Activated CD4-positive, alpha-beta T cell treated with anti-CD3 and anti-CD28 coated beads, Interleukin-2, amount 10 ng/mL, durations not matched to agents 24 days and 14 days (primary cell): ENCODE measurements at regions of chr9 and their contacts with region 1.

Region 1: GRCh38 chr9:34611829-34612630 is at the start of gene RPP25L:
- DNase-seq: peak; percentile 97
- H3K4me3 Mint-ChIP-seq: peak within 1 kb of the TSS; percentile 96
- H3K27ac Mint-ChIP-seq: peak within 1 kb of the TSS; percentile 97
- H3K4me1 Mint-ChIP-seq: peaks cover 21% of the 10 kb centered on the region
- H3K27me3 Mint-ChIP-seq: no peaks in the 10 kb centered on the region
- total RNA-seq, gene RPP25L: 34.8 and 36.1 TPM in 2 replicates

Region 2: DNA sequence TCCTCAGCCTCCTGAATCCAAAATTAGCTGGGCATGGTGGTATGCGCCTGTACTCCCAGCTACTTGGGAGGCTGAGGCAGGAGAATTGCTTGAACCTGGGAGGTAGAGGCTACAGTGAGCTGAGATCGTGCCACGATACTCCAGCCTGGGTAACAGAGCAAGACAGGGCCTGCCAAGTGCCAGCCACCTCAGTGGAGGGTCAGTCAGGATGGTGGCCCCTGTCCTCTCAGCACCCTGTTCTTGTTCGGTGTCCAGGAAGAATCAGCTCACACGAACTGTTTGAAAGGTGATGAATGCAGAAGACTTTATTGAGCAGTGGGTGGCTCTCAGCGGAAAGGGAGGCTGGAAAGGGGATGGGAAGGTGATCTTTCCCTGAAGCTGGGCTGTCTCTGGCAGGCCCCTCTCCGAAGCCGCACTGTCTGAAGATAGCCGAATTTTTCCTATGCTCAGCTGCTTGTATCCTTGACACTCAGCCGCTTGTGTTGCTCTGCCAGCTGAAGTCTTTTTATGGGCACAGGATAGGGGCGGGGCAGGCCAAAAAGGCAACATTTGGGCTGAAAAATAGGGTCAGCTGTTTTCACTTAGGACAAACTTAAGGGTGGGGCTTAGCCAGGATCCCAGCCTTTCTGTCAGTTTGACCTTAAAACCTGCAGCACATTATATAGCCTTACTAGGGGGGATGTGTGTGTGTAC is 744.1 kb before region 1 on chr9:
- intact Hi-C with region 1: no loop called
- DNase-seq: no peak
- H3K4me3 Mint-ChIP-seq: no peak overlapping the region
- H3K27ac Mint-ChIP-seq: no peak overlapping the region
- H3K4me1 Mint-ChIP-seq: peaks cover 6% of the 10 kb centered on the region
- H3K27me3 Mint-ChIP-seq: no peaks in the 10 kb centered on the region

Region 3: GRCh38 chr9:34126207-34127034 is 485.6 kb before region 1 on chr9 and contains the start of gene DCAF12:
- intact Hi-C with region 1: loop called (anchors 5 kb)
- DNase-seq: peak; percentile 98
- H3K4me3 Mint-ChIP-seq: peak within 1 kb of the TSS; percentile 92
- H3K27ac Mint-ChIP-seq: peak within 1 kb of the TSS; percentile 98
- H3K4me1 Mint-ChIP-seq: peaks cover 38% of the 10 kb centered on the region
- H3K27me3 Mint-ChIP-seq: no peaks in the 10 kb centered on the region
- total RNA-seq, gene DCAF12: 45.6 and 51.9 TPM in 2 replicates

Region 4: DNA sequence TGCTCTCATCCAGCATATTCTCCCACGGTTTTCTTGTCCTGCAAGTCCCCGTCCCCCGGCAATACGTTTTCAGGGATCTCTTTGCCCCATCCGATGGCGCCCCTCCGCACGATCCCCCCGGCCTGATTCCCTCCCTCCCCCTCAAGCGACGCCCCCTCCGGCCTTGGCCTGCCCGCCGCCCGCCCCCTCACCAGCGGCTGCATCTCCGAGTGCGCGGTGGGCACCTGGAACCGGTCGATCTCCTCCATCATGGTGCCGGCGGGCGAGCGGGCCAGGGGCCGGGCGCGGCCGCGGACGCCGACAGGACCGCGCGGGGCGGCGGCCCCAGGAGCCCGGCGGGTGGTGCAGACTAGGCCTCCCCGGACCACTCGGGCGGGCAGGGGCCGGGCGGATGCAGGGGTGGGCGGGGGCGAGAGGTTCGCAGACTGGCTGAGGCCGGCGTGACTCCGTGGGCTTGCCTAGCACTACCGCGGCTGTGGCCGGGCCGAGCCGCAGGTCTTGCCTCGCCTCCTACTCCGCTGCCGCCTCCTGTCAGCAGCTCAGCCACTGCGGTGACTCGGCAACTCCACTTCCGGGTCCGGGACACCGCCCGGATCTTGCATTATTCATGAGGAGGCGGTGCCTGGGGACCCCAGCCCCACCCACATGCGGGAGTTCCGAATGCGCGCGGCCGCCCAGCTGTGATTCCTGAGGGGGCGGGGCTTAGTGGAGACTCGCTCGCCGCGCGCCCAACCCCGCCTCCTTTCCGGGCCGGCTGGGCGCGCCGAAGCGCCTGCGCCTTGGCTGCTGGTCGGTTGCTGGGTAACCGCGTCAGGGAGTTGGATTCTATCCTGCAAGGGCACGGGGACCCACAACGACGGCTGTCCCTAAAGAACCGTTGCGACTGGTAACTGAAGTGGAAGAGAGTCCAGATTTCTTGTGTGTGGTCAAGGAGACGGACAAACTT is 153.7 kb before region 1 on chr9 and contains the starts of genes DNAI1 and FAM219A:
- intact Hi-C with region 1: loop called (anchors 1 kb)
- DNase-seq: peak; percentile 100
- H3K4me3 Mint-ChIP-seq: peak within 1 kb of the TSS; percentile 92
- H3K27ac Mint-ChIP-seq: peak within 1 kb of the TSS; percentile 81
- H3K4me1 Mint-ChIP-seq: peaks cover 41% of the 10 kb centered on the region
- H3K27me3 Mint-ChIP-seq: peaks cover 18% of the 10 kb centered on the region
- total RNA-seq, gene DNAI1: not detected in 2 replicates
- total RNA-seq, gene FAM219A: 13.6 and 16.3 TPM in 2 replicates

Region 5: DNA sequence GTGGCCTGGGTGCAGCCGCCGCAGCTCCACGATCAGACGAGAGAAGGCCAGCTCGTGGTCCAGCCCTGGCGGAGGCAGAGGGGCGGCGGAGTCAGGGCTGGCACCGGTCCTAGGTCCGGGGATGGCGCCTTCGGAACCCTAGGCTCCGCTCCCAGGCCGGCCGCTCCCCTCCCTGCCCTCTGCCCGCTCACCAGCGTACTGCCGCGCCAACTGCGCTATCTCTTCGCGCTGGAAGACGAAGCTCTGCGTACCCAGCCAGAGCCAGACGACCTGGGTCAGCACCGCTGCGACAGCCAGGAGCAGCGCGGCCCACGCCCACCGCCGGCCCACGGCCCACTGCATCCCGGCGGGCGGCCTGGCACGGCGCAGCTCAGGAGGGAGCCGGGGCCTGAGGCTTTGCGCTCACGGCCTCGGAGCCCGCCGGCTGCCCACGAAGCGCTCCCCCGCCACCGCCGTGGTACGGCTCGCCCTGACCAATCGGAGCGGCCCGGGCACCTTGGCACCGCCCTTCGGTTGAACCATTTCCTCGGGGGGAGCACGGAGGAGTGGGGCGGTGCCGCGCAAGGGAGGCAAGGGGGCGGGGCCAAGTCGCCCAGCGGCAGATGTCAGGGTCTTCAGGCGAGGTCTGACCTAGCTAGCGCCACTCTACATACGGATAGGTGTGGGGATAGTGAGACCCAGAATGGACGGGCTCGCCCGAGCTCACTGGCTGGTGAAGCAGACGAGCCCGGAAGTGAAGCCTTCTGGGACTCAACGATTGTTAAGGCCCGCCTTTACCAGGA is 25.5 kb after region 1 on chr9 and contains the start of gene SIGMAR1:
- intact Hi-C with region 1: loop called (anchors 1 kb)
- DNase-seq: peak; percentile 98
- H3K4me3 Mint-ChIP-seq: peak within 1 kb of the TSS; percentile 99
- H3K27ac Mint-ChIP-seq: peak within 1 kb of the TSS; percentile 93
- H3K4me1 Mint-ChIP-seq: peaks cover 34% of the 10 kb centered on the region
- H3K27me3 Mint-ChIP-seq: no peaks in the 10 kb centered on the region
- total RNA-seq, gene SIGMAR1: 117 and 128 TPM in 2 replicates

Region 6: DNA sequence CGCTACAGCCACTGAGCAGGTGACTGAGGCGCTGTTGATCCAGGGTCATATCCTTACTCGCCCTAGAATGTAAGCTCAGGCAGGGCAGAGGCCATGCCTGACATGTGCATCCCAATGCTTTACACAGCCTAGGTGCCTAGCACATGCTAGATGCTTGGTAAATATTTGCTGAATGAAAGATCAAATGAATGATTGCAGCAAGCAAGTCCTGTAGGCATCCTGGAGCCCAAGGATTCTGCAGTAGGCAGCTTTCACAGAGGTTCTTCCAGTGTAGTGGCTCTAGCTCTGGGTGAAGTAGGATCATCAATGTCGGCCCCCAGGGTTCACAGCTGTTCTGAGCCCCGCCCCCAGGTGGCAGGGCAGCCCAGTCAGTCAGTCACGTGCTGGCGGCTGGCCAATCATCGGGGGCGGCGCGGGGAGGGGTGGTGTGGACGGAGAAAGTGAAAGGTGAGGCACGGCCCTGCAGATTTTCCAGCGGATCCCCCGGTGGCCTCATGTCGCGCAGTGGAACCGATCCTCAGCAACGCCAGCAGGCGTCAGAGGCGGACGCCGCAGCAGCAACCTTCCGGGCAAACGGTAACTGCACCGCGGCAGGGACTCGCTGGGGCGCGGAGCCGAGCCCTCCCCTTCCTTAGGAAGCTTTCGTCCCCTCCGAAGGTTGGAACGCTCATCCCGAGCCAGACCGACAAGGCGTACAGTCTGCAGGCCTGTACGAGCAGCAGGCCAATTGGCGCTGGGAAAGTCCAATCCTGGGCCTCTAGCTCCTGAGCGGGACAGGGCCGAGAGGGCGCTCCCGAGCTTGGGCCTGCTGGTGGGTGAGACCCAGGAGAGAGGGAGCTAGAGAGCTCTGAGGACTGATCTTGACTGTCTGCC is 34.4 kb after region 1 on chr9 and contains the start of gene GALT:
- intact Hi-C with region 1: loop called (anchors 1 kb)
- DNase-seq: peak; percentile 99
- H3K4me3 Mint-ChIP-seq: peak within 1 kb of the TSS; percentile 94
- H3K27ac Mint-ChIP-seq: peak within 1 kb of the TSS; percentile 92
- H3K4me1 Mint-ChIP-seq: peaks cover 28% of the 10 kb centered on the region
- H3K27me3 Mint-ChIP-seq: no peaks in the 10 kb centered on the region
- total RNA-seq, gene GALT: 68.9 and 73.4 TPM in 2 replicates

Region 7: GRCh38 chr9:34665381-34666250 is 53.6 kb after region 1 on chr9:
- intact Hi-C with region 1: loop called (anchors 2 kb)
- DNase-seq: peak; percentile 97
- H3K4me3 Mint-ChIP-seq: peak overlapping the region; percentile 91
- H3K27ac Mint-ChIP-seq: peak overlapping the region; percentile 90
- H3K4me1 Mint-ChIP-seq: peaks cover 45% of the 10 kb centered on the region
- H3K27me3 Mint-ChIP-seq: no peaks in the 10 kb centered on the region

Region 8: DNA sequence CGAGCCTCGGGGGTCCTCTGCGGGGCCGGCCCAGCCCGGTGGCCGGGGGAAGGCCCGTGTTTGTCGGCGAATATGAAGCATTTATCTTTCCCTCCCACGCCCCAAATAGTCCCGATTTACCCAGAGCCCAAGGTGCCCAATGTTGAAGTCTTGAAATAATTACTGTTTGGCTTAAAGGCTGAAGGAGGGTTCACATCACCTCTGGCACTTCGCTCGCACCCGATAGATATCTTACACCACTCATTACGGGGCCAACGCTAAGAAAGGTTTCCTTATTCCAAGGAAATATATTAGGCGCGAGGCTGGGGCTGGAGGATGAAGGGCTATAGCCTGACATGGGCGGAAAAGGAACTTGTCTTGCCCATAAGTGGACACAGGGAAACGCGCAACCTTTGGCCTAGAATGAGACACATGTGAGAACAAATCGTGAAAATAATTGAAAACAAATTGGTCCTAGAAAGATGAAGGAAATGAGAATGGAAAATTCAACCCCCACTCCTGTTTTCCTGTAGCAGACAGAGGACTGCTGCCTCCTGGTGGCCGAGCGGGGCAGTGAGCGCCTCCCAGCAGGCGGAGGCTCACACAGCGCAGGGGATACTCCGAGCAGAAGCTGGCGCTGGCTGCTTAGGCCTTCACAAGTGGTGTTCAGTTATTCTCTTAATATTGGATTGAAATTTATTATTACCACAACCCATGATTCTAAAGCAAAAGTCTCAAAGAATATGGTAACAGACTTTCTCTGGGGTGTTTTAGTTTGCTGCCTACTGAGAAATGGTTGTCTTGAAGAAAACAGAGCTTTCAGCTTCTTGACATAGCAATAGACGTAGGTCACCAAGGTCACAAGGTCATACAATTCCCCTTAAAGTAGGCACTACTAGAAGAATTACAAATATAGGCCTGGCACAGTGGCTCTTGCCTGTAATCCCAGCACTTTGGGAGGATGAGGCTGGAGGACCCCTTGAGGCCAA is 90.0 kb after region 1 on chr9:
- intact Hi-C with region 1: loop called (anchors 5 kb)
- DNase-seq: peak; percentile 94
- H3K4me3 Mint-ChIP-seq: peak overlapping the region; percentile 77
- H3K27ac Mint-ChIP-seq: no peak overlapping the region
- H3K4me1 Mint-ChIP-seq: peaks cover 9% of the 10 kb centered on the region
- H3K27me3 Mint-ChIP-seq: peaks cover 24% of the 10 kb centered on the region

Region 9: DNA sequence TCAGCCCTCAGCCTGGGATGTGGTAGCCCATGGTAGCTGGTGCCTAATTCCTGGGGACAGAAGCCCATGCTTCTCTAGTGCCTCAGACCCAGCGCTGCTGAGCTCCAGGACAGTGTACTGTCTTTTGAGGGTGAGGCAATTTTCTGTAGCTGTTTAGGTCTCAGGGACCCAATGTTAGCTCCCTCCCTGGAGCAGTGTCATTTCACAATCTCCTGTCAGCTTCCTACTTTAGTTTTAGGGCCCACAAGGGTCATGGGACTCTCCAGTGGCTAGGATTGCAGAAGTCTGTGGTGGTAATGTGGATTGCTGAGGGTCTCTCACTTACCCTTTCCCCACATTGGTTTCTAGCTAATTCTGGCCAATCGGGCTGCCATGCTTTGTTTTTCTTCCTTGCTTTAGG is 165.6 kb after region 1 on chr9:
- intact Hi-C with region 1: no loop called
- DNase-seq: no peak
- H3K4me3 Mint-ChIP-seq: no peak overlapping the region
- H3K27ac Mint-ChIP-seq: no peak overlapping the region
- H3K4me1 Mint-ChIP-seq: no peaks in the 10 kb centered on the region
- H3K27me3 Mint-ChIP-seq: peaks cover 19% of the 10 kb centered on the region